Heart right ventricle (tissue), 16 donors: ENCODE measurements at regions of chr5 and their contacts with region 1.

Region 1: DNA sequence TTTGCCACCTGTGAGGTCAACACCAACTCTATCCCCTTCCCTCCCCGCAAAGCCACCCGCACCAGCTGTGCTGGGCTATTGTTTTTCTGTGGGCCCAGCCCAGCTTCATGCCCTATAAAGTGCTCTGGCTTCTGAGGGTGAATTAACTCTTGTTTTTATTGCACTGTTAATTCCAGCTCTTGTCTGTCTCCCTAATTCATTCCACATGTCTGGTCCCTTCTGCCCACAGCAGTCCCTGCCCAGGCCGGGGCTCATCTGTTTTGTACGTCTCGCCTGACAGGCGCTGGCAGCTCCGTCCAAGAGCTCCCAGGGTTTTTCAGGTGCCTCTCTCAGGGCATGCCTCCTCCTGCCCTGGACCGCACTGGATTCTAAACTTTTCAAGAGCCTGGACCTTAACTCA is 118.9 kb downstream of the PDZD2 start:
- DNase-seq: no peak
- ATAC-seq: peak in 5 of 8 donors; percentile 15 to 48 (median 27)
- H3K4me3 ChIP-seq: no peak overlapping the region
- H3K27ac ChIP-seq: peak overlapping the region in 2 of 10 donors; percentile 15 to 16
- H3K4me1 ChIP-seq: peaks cover 0 to 29% (median 12%) of the 10 kb centered on the region in 9 donors
- H3K27me3 ChIP-seq: no peaks in the 10 kb centered on the region
- CTCF ChIP-seq: no peak

Region 2: DNA sequence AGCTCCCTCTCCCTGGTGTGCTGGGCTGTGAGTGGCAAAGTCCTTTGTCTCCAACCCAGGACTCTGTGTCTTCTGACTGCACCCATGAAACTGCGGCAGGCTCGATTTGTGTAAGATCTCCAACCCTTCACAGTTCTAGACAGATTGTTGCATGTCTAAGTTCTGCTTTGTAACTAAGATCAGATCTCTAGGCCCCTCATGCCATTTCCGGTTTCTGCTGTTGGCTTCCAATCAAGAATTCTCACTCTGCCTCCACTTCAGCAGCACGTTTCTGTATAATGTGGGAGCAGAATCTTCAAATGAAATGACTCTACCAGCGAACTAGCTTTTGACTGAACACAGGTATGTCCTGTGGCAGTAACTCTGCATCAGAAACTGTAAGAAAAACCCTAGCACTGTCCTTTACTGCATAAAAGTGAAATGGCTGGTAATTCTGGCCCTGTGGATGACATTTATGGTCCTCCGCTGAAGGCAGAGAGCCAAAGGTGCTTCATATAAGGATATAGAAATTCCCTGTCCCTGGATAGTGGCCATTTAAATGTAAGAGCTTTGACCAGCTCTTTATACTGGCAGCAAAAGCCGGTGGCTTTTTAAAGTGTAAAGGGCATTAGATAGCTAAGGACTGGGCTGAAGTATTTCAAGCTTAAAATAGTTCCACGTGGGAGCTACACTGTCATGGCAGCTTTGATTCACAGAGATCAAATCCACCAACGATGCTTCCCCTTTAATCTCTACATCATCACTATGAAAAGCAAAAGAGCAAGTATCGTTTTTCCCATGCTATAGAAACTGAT is 883.4 kb before region 1 on chr5:
- intact Hi-C with region 1: loop called in 1 of 10 experiments (anchors 5 kb)
- DNase-seq: peak in 1 of 2 donors; percentile 5
- ATAC-seq: peak in 7 of 8 donors; percentile 71 to 92 (median 88)
- H3K4me3 ChIP-seq: no peak overlapping the region
- H3K27ac ChIP-seq: peak overlapping the region in 6 of 10 donors; percentile 35 to 59 (median 54)
- H3K4me1 ChIP-seq: peaks cover 0 to 14% (median 4%) of the 10 kb centered on the region in 9 donors
- H3K27me3 ChIP-seq: no peaks in the 10 kb centered on the region
- CTCF ChIP-seq: no peak

Region 3: GRCh38 chr5:31781772-31782171 is 24.0 kb after region 1 on chr5:
- intact Hi-C with region 1: no loop called
- DNase-seq: no peak
- ATAC-seq: peak in 4 of 8 donors; percentile 5 to 65 (median 51)
- H3K4me3 ChIP-seq: no peak overlapping the region
- H3K27ac ChIP-seq: peak overlapping the region in 5 of 10 donors; percentile 9 to 59 (median 51)
- H3K4me1 ChIP-seq: peaks cover 5 to 67% (median 31%) of the 10 kb centered on the region in 9 donors
- H3K27me3 ChIP-seq: no peaks in the 10 kb centered on the region
- CTCF ChIP-seq: no peak

Region 4: GRCh38 chr5:31825518-31826068 is 67.8 kb after region 1 on chr5:
- intact Hi-C with region 1: no loop called
- DNase-seq: peak in 1 of 2 donors; percentile 61
- ATAC-seq: peak; percentile 69 to 92 (median 82)
- H3K4me3 ChIP-seq: no peak overlapping the region
- H3K27ac ChIP-seq: no peak overlapping the region
- H3K4me1 ChIP-seq: peaks cover 0 to 20% (median 13%) of the 10 kb centered on the region in 9 donors
- H3K27me3 ChIP-seq: no peaks in the 10 kb centered on the region
- CTCF ChIP-seq: peak; percentile 36 to 87 (median 71)